GM12878 (cell line): ENCODE measurements at regions of chr2 and their contacts with region 1.

Region 1: DNA sequence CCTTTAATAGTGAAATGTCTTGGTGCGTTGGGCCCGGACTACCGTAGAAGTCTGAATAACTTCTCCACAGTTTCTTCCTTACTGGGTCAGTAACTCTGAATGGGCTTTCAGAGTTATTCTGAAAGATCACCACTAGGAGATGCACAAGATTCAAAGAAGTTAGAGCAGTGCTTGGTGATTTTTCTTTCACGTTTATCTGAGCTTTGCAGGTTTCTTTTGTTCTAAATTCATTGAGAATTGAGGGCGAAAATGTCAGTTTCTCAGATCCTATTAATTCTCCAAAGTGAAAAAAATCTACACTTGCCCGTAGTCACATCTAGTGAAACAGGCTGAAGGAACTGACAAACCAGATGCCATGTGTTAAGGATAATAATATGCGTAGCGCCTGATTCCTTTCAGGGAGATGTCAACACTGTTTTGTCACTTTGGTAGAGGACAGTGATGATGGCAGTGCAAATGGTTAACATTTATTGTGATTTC is 70.1 kb downstream of the QPCT start:
- DNase-seq: peak; percentile 53
- ATAC-seq: peak; percentile 94
- H3K4me3 ChIP-seq: no peak overlapping the region
- H3K27ac ChIP-seq: no peak overlapping the region
- H3K4me1 ChIP-seq: peaks cover 4% of the 10 kb centered on the region; the same call in 1 of the 2 replicates
- H3K27me3 ChIP-seq: no peaks in the 10 kb centered on the region
- CTCF ChIP-seq: peak; percentile 88 to 99 (median 98); a peak in 5 of 6 replicates
- EP300 ChIP-seq: no peak
- POLR2A ChIP-seq: no peak
- RAD21 ChIP-seq: peak; percentile 100

Region 2: DNA sequence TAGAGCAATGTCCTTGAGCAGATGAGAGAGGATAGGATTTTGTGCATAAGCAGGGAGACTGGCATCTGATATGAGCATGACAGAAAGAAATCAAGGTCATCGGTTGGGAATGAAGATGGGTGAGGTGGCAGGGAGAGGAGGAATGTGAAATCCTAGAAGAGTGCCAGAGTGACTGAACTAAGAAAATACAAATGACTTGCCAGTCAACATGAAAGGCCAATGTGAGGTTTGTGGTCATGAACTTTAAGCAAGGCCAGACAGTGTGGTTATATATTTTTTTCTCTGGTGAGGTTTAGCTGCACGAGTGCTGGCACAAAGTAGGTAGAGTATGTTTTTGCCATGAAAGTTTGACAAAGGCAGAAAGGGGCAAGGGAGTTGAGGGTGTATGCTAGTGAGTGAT is 48.8 kb before region 1 on chr2:
- CTCF ChIA-PET with region 1: no interaction called
- POLR2A ChIA-PET with region 1: no interaction called
- RAD21 ChIA-PET with region 1: no interaction called
- SMC1A ChIA-PET with region 1: no interaction called
- in situ Hi-C with region 1: no loop called
- intact Hi-C with region 1: no loop called
- DNase-seq: no peak
- ATAC-seq: peak; percentile 74
- H3K4me3 ChIP-seq: no peak overlapping the region
- H3K27ac ChIP-seq: no peak overlapping the region
- H3K4me1 ChIP-seq: peaks cover 3% of the 10 kb centered on the region; the same call in 1 of the 2 replicates
- H3K27me3 ChIP-seq: peaks cover 3 to 16% of the 10 kb centered on the region in 2 experiments; a peak in 3 of 4 replicates
- CTCF ChIP-seq: no peak
- EP300 ChIP-seq: no peak
- POLR2A ChIP-seq: no peak
- RAD21 ChIP-seq: no peak

Region 3: DNA sequence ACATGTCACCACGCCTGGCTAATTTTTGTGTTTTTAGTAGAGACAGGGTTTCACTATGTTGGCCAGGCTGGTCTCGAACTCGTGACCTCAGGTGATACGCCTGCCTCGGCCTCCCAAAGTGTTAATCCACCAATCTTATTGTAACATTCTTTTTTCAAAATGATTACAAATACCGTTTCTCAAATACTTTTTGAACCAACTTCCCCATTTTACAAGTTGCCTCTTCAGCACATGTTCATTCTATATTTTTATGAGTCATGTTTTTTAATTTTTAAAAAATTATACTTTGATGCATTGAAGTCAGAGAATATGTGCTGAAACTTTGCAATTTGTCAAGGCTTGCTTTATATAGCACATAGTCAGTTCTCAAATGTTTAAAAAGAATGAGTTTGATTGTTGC is 11.9 kb before region 1 on chr2:
- CTCF ChIA-PET with region 1: interaction called, 79 read pairs
- POLR2A ChIA-PET with region 1: interaction called, 3 read pairs
- RAD21 ChIA-PET with region 1: interaction called, 33 read pairs
- SMC1A ChIA-PET with region 1: interaction called, 75 read pairs
- in situ Hi-C with region 1: no loop called
- intact Hi-C with region 1: no loop called
- DNase-seq: no peak
- ATAC-seq: no peak
- H3K4me3 ChIP-seq: no peak overlapping the region
- H3K27ac ChIP-seq: no peak overlapping the region
- H3K4me1 ChIP-seq: no peaks in the 10 kb centered on the region
- H3K27me3 ChIP-seq: no peaks in the 10 kb centered on the region
- CTCF ChIP-seq: no peak
- EP300 ChIP-seq: no peak
- POLR2A ChIP-seq: no peak
- RAD21 ChIP-seq: no peak

Region 4: GRCh38 chr2:37549598-37549997 is 135.1 kb after region 1 on chr2:
- CTCF ChIA-PET with region 1: interaction called, 4 read pairs
- POLR2A ChIA-PET with region 1: no interaction called
- RAD21 ChIA-PET with region 1: interaction called, 19 read pairs
- SMC1A ChIA-PET with region 1: interaction called, 10 read pairs
- in situ Hi-C with region 1: no loop called
- intact Hi-C with region 1: no loop called
- DNase-seq: no peak
- ATAC-seq: peak; percentile 87
- H3K4me3 ChIP-seq: peak overlapping the region; percentile 4; the same call in 1 of the 2 replicates
- H3K27ac ChIP-seq: peak overlapping the region; percentile 95
- H3K4me1 ChIP-seq: peaks cover 36% of the 10 kb centered on the region
- H3K27me3 ChIP-seq: no peaks in the 10 kb centered on the region
- CTCF ChIP-seq: no peak
- EP300 ChIP-seq: no peak
- POLR2A ChIP-seq: no peak
- RAD21 ChIP-seq: no peak

Region 5: DNA sequence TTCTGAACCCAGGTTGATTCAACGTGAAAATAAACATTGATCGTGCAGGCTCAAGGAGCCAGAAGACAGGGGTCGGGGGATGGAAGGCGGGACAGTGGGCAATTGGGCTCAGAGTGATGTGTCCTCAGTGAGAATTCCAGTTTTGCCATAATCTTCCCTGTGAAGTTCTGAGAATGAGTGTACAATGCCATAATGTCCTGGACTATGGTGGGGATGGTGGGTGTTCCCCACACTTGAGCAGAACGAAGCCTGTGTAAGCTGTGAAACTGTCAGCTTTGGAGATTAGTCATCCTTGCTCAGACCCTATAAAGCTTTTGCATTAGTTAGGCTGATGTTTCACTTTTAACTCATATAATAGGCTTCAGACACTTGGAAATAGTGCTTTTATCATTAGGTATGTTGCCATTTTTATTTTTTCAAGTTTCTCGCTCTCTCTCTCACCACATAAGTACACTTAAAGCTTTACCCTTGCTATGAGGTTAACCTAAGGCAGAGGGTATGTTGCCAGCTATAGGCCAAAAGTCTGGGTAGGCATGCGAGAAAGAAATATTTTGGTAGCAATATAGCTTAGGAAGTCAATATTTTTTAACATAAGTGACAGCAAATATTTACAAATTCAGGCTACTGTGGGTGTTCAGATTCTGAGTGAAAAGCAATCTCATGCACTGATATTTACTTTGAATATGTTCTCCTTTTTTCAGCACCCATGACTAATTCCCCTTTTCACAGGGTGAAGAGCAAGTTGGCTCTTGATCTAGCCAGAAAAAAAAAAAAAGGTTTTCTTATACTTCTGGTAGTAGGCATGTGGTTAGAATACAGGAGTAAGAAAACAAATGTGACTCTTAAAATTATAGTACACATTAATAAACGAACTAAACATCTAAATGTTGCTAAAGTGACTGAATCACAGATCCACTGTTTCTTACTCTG is 209.7 kb after region 1 on chr2:
- CTCF ChIA-PET with region 1: interaction called, 12 read pairs
- POLR2A ChIA-PET with region 1: interaction called, 4 read pairs
- RAD21 ChIA-PET with region 1: interaction called, 18 read pairs
- SMC1A ChIA-PET with region 1: interaction called, 25 read pairs
- in situ Hi-C with region 1: no loop called
- intact Hi-C with region 1: loop called (anchors 2 kb)
- DNase-seq: peak; percentile 93
- ATAC-seq: peak; percentile 79
- H3K4me3 ChIP-seq: peak overlapping the region; percentile 24; the same call in 1 of the 2 replicates
- H3K27ac ChIP-seq: peak overlapping the region; percentile 97
- H3K4me1 ChIP-seq: peaks cover 54% of the 10 kb centered on the region
- H3K27me3 ChIP-seq: no peaks in the 10 kb centered on the region
- CTCF ChIP-seq: no peak
- EP300 ChIP-seq: peak; percentile 56 to 80
- POLR2A ChIP-seq: no peak
- RAD21 ChIP-seq: peak; percentile 1; the same call in 1 of the 2 replicates

Region 6: DNA sequence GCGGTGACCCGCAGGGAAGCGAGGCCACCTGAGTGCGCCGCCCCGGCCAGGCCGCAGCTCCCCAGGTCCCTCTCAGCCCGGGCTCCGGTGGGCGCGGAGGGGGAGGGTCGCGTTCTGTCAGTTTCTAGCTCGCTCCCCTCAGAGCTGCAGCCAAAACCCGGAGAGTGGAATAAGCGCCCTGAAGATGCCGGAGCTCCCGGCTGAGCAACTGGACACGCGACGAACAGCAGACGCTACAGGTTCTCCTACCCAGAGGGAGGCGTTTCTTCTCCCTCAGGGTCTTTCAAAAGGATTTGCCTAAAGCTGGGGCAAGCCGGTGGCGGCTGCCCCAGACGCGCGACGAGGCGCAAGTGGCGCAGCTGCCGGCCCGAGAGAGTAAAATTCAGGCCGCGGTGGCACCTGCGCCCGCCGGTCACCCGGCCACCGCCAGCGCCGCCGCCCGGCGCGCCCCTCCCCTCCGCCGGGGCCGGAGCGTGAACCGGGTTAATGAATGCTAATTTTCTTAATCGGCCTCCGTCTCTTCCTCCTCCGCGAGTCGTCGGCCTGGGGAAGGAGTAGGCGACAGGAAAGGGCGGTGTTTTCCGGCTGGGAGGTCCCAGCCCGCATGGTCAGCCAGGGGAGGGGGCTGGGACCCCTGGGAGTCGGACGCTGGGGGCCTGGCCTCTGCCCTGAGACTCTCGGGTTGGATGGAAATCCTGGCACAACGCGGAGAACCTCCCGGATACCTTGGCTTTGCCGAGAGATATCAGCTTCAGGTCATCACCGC is 257.8 kb after region 1 on chr2:
- CTCF ChIA-PET with region 1: interaction called, 10 read pairs
- POLR2A ChIA-PET with region 1: no interaction called
- RAD21 ChIA-PET with region 1: interaction called, 10 read pairs
- SMC1A ChIA-PET with region 1: interaction called, 14 read pairs
- in situ Hi-C with region 1: loop called (anchors 5 kb)
- intact Hi-C with region 1: loop called (anchors 2 kb)
- DNase-seq: no peak
- ATAC-seq: peak; percentile 58
- H3K4me3 ChIP-seq: peak overlapping the region; percentile 87
- H3K27ac ChIP-seq: peak overlapping the region; percentile 77
- H3K4me1 ChIP-seq: no peaks in the 10 kb centered on the region; the same call in 1 of the 2 replicates
- H3K27me3 ChIP-seq: no peaks in the 10 kb centered on the region
- CTCF ChIP-seq: no peak
- EP300 ChIP-seq: no peak
- POLR2A ChIP-seq: peak; percentile 51; the same call in 1 of the 2 replicates
- RAD21 ChIP-seq: no peak

Region 7: DNA sequence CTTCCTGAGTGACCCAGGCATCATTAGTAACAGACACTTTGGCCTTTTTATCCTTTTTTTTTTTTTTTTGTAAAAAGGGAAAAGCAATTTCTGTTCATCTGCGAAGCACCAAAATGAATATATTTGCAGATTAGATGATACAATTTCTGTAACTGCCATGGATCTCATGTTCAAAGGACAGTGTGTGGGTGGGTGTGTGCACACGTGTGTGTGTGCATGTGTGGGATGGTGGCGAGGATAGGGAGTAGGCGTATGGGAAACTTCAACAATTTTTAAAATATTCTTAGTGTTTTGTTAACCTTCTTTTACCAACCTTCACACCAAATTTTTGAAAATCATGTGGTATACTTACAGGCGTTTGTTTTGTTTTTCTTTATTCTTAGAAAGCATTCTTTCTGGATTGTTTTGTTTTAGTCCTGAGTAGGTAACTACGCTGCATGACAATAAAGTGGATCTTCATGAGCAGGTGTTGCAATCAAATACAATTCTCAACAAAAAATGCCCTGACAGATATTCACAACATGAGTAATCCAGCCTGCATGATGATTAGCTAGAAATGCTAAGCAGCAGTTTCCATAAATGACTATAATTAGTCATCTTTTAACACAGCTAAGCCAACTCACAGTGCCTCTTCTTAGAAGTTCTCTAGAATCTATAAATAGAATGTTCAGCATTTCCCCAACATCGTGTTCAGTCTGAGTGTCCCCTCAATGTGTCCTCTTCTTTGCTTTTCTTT is 457.1 kb after region 1 on chr2:
- CTCF ChIA-PET with region 1: interaction called, 336 read pairs
- POLR2A ChIA-PET with region 1: interaction called, 4 read pairs
- RAD21 ChIA-PET with region 1: interaction called, 211 read pairs
- SMC1A ChIA-PET with region 1: interaction called, 271 read pairs
- in situ Hi-C with region 1: no loop called
- intact Hi-C with region 1: no loop called
- DNase-seq: no peak
- ATAC-seq: peak; percentile 77
- H3K4me3 ChIP-seq: no peak overlapping the region
- H3K27ac ChIP-seq: no peak overlapping the region
- H3K4me1 ChIP-seq: peaks cover 16% of the 10 kb centered on the region
- H3K27me3 ChIP-seq: peaks cover 0 to 2% of the 10 kb centered on the region in 2 experiments; a peak in 1 of 4 replicates
- CTCF ChIP-seq: no peak
- EP300 ChIP-seq: peak in 1 of 2 experiments; percentile 18; a peak in 2 of 4 replicates
- POLR2A ChIP-seq: no peak
- RAD21 ChIP-seq: no peak